ENCODE measurements at regions of chr18 and their contacts with region 1.

Region 1: GRCh38 chr18:32092422-32093101 is 888 bp downstream of the RNF138 start:
- DNase-seq: peak; percentile 100
- H3K4me3 Mint-ChIP-seq: peak overlapping the region; percentile 97
- H3K27ac Mint-ChIP-seq: peak overlapping the region; percentile 99
- H3K4me1 Mint-ChIP-seq: peaks cover 41% of the 10 kb centered on the region
- H3K27me3 Mint-ChIP-seq: no peaks in the 10 kb centered on the region

Region 2: GRCh38 chr18:31658670-31659575 is 433.6 kb before region 1 on chr18:
- CTCF ChIA-PET with region 1: no interaction called
- POLR2A ChIA-PET with region 1: no interaction called
- intact Hi-C with region 1: loop called (anchors 1 kb)
- DNase-seq: peak; percentile 34
- H3K4me3 Mint-ChIP-seq: no peak overlapping the region
- H3K27ac Mint-ChIP-seq: peak overlapping the region; percentile 60
- H3K4me1 Mint-ChIP-seq: peaks cover 23% of the 10 kb centered on the region
- H3K27me3 Mint-ChIP-seq: peaks cover 2% of the 10 kb centered on the region

Region 3: GRCh38 chr18:31942999-31943865 is 149.3 kb before region 1 on chr18 and contains the start of gene TRAPPC8:
- CTCF ChIA-PET with region 1: interaction called, 3 read pairs
- POLR2A ChIA-PET with region 1: interaction called, 25 read pairs
- intact Hi-C with region 1: loop called (anchors 1 kb)
- DNase-seq: peak; percentile 95
- H3K4me3 Mint-ChIP-seq: peak within 1 kb of the TSS; percentile 100
- H3K27ac Mint-ChIP-seq: peak within 1 kb of the TSS; percentile 99
- H3K4me1 Mint-ChIP-seq: peaks cover 36% of the 10 kb centered on the region
- H3K27me3 Mint-ChIP-seq: no peaks in the 10 kb centered on the region
- total RNA-seq, gene TRAPPC8: 30.4 to 34.2 TPM

Region 4: GRCh38 chr18:32040936-32041335 is 51.6 kb before region 1 on chr18:
- CTCF ChIA-PET with region 1: no interaction called
- POLR2A ChIA-PET with region 1: interaction called, 5 read pairs
- intact Hi-C with region 1: loop called (anchors 1 kb)
- DNase-seq: peak; percentile 73
- H3K4me3 Mint-ChIP-seq: peak overlapping the region; percentile 21
- H3K27ac Mint-ChIP-seq: peak overlapping the region; percentile 87
- H3K4me1 Mint-ChIP-seq: peaks cover 66% of the 10 kb centered on the region
- H3K27me3 Mint-ChIP-seq: no peaks in the 10 kb centered on the region

Region 5: DNA sequence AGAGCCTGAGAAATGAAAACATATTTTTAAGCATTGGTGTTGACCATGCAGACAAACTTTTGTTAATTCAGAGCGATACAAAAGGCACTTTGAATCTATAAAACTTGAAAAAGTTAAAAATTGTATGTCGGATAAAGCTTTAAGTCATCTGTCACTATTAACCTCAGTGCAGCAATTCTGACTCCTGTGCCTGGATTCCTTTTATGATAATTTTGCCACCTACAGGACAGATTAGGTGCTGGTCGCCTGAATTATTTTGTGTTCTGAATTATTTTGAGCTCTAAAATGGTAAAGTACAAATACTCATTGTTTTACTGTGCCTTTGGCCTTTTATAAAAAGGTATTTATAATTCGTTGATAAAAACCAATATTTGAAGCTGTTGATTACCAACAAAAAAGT is 20.2 kb before region 1 on chr18:
- CTCF ChIA-PET with region 1: interaction called, 6 read pairs
- POLR2A ChIA-PET with region 1: no interaction called
- intact Hi-C with region 1: loop called (anchors 1 kb)
- DNase-seq: no peak
- H3K4me3 Mint-ChIP-seq: no peak overlapping the region
- H3K27ac Mint-ChIP-seq: peak overlapping the region; percentile 13
- H3K4me1 Mint-ChIP-seq: peaks cover 27% of the 10 kb centered on the region
- H3K27me3 Mint-ChIP-seq: no peaks in the 10 kb centered on the region

Region 6: GRCh38 chr18:32122039-32122438 is 29.5 kb after region 1 on chr18:
- CTCF ChIA-PET with region 1: no interaction called
- POLR2A ChIA-PET with region 1: no interaction called
- intact Hi-C with region 1: no loop called
- DNase-seq: no peak
- H3K4me3 Mint-ChIP-seq: no peak overlapping the region
- H3K27ac Mint-ChIP-seq: no peak overlapping the region
- H3K4me1 Mint-ChIP-seq: peaks cover 5% of the 10 kb centered on the region
- H3K27me3 Mint-ChIP-seq: no peaks in the 10 kb centered on the region

Region 7: GRCh38 chr18:32301976-32302743 is 209.6 kb after region 1 on chr18:
- CTCF ChIA-PET with region 1: no interaction called
- POLR2A ChIA-PET with region 1: no interaction called
- intact Hi-C with region 1: no loop called
- DNase-seq: no peak
- H3K4me3 Mint-ChIP-seq: no peak overlapping the region
- H3K27ac Mint-ChIP-seq: no peak overlapping the region
- H3K4me1 Mint-ChIP-seq: peaks cover 5% of the 10 kb centered on the region
- H3K27me3 Mint-ChIP-seq: peaks cover 2% of the 10 kb centered on the region

Region 8: DNA sequence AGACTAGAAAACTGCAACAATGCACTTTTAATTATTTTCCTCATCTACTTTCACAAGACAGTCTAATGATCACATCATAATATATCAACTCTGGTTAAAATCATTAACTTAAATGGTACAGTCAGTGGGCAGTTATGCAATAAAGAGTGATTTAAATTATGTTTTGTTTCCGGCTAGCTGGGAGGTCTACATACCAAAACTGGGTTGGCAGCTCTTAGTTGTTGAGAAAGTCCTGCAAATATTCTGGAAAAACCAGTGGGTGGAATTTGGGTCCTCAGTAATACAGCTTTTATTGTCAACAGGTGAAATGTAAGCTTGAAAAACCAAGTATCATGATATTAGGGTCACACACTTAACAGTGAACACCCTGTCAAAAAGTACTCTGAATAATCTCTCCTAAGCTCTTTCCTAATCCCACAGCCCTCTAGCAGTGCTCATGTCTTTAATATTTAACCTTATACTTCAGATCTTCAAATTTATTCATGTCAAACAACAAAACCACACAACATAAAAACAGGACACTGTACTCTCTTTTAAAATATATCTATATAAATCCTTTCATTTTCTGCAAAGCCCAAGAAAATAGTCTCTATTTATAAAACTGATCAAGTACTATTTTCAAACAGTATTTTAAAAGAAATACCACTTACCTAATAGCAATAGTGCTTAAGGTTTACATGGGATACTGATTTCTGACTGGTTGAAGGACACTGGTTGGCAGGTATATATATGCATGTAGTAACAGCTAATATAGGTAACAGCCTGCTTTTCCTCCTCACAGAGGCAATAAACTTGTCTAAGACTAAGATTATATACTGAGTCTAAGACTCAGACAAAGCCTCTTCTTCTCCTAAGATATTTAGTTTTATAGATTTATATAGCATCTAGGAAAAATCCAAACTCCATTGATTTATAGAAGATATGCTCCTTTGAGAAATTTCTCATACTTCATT is 274.3 kb after region 1 on chr18:
- CTCF ChIA-PET with region 1: no interaction called
- POLR2A ChIA-PET with region 1: no interaction called
- intact Hi-C with region 1: no loop called
- DNase-seq: no peak
- H3K4me3 Mint-ChIP-seq: no peak overlapping the region
- H3K27ac Mint-ChIP-seq: no peak overlapping the region
- H3K4me1 Mint-ChIP-seq: no peaks in the 10 kb centered on the region
- H3K27me3 Mint-ChIP-seq: peaks cover 4% of the 10 kb centered on the region

Region 9: GRCh38 chr18:32530947-32531651 is 438.5 kb after region 1 on chr18:
- CTCF ChIA-PET with region 1: no interaction called
- POLR2A ChIA-PET with region 1: no interaction called
- intact Hi-C with region 1: loop called (anchors 1 kb)
- DNase-seq: peak; percentile 16
- H3K4me3 Mint-ChIP-seq: no peak overlapping the region
- H3K27ac Mint-ChIP-seq: no peak overlapping the region
- H3K4me1 Mint-ChIP-seq: peaks cover 12% of the 10 kb centered on the region
- H3K27me3 Mint-ChIP-seq: peaks cover 5% of the 10 kb centered on the region

Measured in activated CD4-positive, alpha-beta memory T cell treated with anti-CD3 and anti-CD28 coated beads for 36 hours (primary cell).